B cell (primary cell): ENCODE measurements at regions of chr6 and their contacts with region 1.

Region 1: GRCh38 chr6:135675862-135676261 is 175.6 kb upstream of the PDE7B start:
- DNase-seq: peak; percentile 78
- ATAC-seq: peak; percentile 64
- H3K4me3 ChIP-seq: no peak overlapping the region
- H3K4me3 Mint-ChIP-seq: no peak overlapping the region
- H3K27ac ChIP-seq: no peak overlapping the region
- H3K27ac Mint-ChIP-seq: no peak overlapping the region
- H3K4me1 ChIP-seq: no peaks in the 10 kb centered on the region
- H3K4me1 Mint-ChIP-seq: no peaks in the 10 kb centered on the region
- H3K27me3 ChIP-seq: no peaks in the 10 kb centered on the region
- H3K27me3 Mint-ChIP-seq: no peaks in the 10 kb centered on the region
- CTCF ChIP-seq: peak; percentile 87

Region 2: DNA sequence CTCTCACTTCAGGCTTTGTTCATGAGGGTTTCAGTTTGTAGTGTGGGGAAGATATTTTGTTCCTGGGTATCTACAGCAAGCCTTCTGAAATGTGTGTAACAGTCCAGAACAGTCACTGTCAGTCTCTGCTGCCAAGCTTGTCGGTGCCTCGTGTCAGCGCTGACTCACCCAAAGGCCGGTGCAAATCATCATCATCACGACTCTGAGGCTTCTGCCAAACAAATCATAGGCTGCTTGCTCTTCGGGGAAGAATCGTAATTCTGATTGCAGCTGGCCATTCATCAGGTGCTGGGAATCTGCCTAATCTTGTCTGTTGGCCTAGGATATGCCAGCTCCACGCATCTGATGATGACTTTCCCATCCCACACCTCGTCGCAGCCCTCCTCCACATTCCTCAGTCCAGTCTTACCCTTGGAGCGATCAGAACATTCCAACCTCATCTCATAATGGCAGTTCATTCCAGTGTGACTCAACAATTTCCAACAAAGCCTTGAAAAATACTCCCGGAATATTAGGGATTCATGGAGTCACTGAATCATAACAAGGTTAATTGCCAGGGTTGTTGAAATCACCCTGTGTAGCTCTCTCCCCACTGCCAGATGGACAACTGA is 766.9 kb before region 1 on chr6:
- CTCF ChIA-PET with region 1: no interaction called
- POLR2A ChIA-PET with region 1: no interaction called
- intact Hi-C with region 1: no loop called
- DNase-seq: no peak
- ATAC-seq: no peak
- H3K4me3 ChIP-seq: no peak overlapping the region
- H3K4me3 Mint-ChIP-seq: no peak overlapping the region
- H3K27ac ChIP-seq: no peak overlapping the region
- H3K27ac Mint-ChIP-seq: no peak overlapping the region
- H3K4me1 ChIP-seq: no peaks in the 10 kb centered on the region
- H3K4me1 Mint-ChIP-seq: no peaks in the 10 kb centered on the region
- H3K27me3 ChIP-seq: peaks cover 0 to 7% (median 0%) of the 10 kb centered on the region in 4 experiments
- H3K27me3 Mint-ChIP-seq: peaks cover 8% of the 10 kb centered on the region
- CTCF ChIP-seq: no peak

Region 3: DNA sequence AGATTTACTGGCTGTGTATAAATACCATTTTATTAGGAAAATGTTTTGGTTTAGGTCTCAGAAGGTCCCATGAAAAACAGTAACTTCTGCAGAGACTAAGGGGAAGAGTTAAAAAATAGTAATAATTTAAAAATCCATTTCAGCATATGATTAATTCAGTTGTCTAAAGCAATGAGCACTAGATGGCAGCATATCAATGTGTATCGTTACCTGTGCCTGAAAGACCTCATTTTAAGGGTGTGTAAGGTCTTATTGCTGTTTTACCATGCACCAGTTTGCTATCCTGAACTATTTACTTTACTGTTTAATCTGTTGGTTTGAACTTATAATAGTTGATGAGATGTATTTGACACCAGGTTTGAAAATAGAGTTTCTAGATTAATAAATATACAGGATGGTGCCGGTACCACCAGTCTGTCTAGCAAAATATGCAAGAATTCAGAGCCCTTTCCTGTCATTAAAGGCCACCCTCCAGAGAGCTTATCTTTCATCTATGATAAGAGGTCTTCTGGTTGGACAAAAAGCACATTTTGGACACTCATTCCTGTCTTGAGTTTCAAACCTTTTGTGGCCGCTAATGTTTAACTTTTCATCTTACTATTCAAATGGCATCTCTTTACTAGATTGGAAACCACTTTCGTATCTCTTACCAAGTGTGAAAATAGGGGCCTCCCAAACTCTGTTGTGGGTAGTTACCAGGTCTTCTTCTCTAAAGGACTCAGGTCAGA is 169.4 kb before region 1 on chr6:
- CTCF ChIA-PET with region 1: interaction called, 3 read pairs
- POLR2A ChIA-PET with region 1: no interaction called
- intact Hi-C with region 1: loop called (anchors 5 kb)
- DNase-seq: peak; percentile 58
- ATAC-seq: peak; percentile 67
- H3K4me3 ChIP-seq: no peak overlapping the region
- H3K4me3 Mint-ChIP-seq: no peak overlapping the region
- H3K27ac ChIP-seq: no peak overlapping the region
- H3K27ac Mint-ChIP-seq: no peak overlapping the region
- H3K4me1 ChIP-seq: no peaks in the 10 kb centered on the region
- H3K4me1 Mint-ChIP-seq: peaks cover 2% of the 10 kb centered on the region
- H3K27me3 ChIP-seq: no peaks in the 10 kb centered on the region
- H3K27me3 Mint-ChIP-seq: no peaks in the 10 kb centered on the region
- CTCF ChIP-seq: peak; percentile 81

Region 4: DNA sequence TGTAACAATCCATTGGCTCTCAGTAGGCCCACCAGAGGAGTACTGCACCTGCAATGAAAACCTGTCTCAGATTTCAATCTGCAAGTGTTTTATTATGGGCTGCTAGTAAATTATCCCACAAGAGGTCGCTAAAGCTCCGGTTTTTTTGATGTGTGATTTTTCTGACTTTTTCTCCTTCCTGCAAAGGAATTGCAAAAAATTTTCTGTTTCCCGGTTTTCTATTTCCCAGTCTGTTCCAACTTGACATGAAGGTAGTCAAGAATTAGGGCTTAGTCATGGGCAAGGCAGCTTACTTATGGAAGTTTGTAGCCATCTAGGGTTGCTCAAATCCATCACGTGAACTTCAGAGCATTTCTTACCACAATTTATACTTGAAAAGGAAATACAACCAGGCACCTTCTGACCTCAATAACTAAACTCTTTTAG is 139.9 kb before region 1 on chr6:
- CTCF ChIA-PET with region 1: interaction called, 23 read pairs
- POLR2A ChIA-PET with region 1: no interaction called
- intact Hi-C with region 1: loop called (anchors 1 kb)
- DNase-seq: peak; percentile 42
- ATAC-seq: no peak
- H3K4me3 ChIP-seq: no peak overlapping the region
- H3K4me3 Mint-ChIP-seq: no peak overlapping the region
- H3K27ac ChIP-seq: no peak overlapping the region
- H3K27ac Mint-ChIP-seq: no peak overlapping the region
- H3K4me1 ChIP-seq: no peaks in the 10 kb centered on the region
- H3K4me1 Mint-ChIP-seq: peaks cover 8% of the 10 kb centered on the region
- H3K27me3 ChIP-seq: no peaks in the 10 kb centered on the region
- H3K27me3 Mint-ChIP-seq: peaks cover 10% of the 10 kb centered on the region
- CTCF ChIP-seq: peak; percentile 74

Region 5: GRCh38 chr6:136031982-136032381 is 356.1 kb after region 1 on chr6:
- CTCF ChIA-PET with region 1: no interaction called
- POLR2A ChIA-PET with region 1: no interaction called
- intact Hi-C with region 1: loop called (anchors 10 kb)
- DNase-seq: no peak
- ATAC-seq: no peak
- H3K4me3 ChIP-seq: no peak overlapping the region
- H3K4me3 Mint-ChIP-seq: no peak overlapping the region
- H3K27ac ChIP-seq: no peak overlapping the region
- H3K27ac Mint-ChIP-seq: no peak overlapping the region
- H3K4me1 ChIP-seq: no peaks in the 10 kb centered on the region
- H3K4me1 Mint-ChIP-seq: peaks cover under 1% of the 10 kb centered on the region
- H3K27me3 ChIP-seq: no peaks in the 10 kb centered on the region
- H3K27me3 Mint-ChIP-seq: no peaks in the 10 kb centered on the region
- CTCF ChIP-seq: no peak

Region 6: GRCh38 chr6:136317021-136317694 is 641.3 kb after region 1 on chr6:
- CTCF ChIA-PET with region 1: interaction called, 14 read pairs
- POLR2A ChIA-PET with region 1: no interaction called
- intact Hi-C with region 1: no loop called
- DNase-seq: peak; percentile 72
- ATAC-seq: peak; percentile 62
- H3K4me3 ChIP-seq: no peak overlapping the region
- H3K4me3 Mint-ChIP-seq: no peak overlapping the region
- H3K27ac ChIP-seq: no peak overlapping the region
- H3K27ac Mint-ChIP-seq: no peak overlapping the region
- H3K4me1 ChIP-seq: no peaks in the 10 kb centered on the region
- H3K4me1 Mint-ChIP-seq: no peaks in the 10 kb centered on the region
- H3K27me3 ChIP-seq: no peaks in the 10 kb centered on the region
- H3K27me3 Mint-ChIP-seq: peaks cover 7% of the 10 kb centered on the region
- CTCF ChIP-seq: peak; percentile 86